ENCODE measurements at regions of chr9 and their contacts with region 1.

Region 1: DNA sequence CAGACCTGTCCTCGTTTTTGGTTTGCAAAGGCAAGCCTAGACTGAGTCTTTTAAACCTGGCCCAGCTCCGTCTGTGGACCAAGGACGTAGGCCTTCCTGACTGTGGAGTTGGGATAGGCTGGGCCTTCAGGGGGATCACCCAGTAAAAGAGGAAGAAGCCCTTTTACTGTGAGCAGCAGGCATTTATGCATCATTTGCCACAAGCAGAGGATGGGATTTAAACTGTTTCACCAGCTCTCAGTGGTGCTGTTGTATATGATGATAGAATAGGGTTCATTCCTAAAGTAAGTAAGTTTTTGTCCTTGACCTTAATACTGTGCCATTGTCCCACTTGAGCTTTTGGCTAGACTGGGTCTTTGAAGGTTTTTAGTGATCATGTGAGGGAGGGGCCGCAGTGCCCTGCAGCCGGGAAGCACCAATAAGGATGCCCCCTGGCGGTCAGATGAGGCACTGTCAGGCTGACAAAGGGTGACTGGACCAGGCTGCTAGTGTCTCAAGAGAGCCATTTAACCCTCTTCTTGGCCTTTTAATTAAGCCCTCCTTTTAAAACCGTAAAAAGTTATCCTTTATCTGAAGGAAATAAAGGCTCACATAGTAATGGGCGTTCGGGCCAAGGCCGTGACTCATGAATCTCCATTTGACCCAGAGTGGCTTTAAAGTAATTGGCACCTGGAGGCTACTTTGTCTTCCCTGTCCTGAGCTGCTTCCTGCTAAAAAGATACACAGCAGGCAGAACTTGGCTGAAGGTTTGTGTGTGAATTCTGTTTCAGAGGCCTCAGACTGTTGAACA is 74.0 kb downstream of the UBAP1 start:
- DNase-seq: peak; percentile 82
- H3K4me3 ChIP-seq: no peak overlapping the region
- H3K27ac ChIP-seq: peak overlapping the region; percentile 73 to 95
- H3K4me1 ChIP-seq: peaks cover 71% of the 10 kb centered on the region
- H3K27me3 ChIP-seq: no peaks in the 10 kb centered on the region
- CTCF ChIP-seq: peak; percentile 90 to 96 (median 92)
- POLR2A ChIP-seq: no peak

Region 2: DNA sequence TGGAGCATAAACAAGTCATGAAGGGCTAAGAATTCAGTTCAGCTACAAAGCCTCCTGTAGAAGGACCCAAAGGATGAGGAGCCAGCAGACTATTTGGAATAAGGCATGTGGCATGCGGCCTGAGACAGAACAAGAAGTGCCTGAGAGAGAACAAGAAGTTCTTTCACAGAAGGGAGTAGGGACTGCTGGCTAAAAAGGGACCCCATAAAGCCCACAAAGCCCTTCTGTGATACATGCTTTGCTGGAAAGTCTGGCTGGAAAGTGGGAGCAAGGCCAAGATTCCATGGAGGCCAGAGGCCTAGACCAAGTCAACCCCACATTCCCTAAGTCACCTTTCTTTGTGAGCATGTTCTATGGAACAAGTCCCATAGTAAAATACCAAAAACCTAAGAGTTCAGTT is 168.3 kb before region 1 on chr9:
- intact Hi-C with region 1: loop called (anchors 10 kb)
- DNase-seq: peak; percentile 82
- H3K4me3 ChIP-seq: no peak overlapping the region
- H3K27ac ChIP-seq: peak overlapping the region; percentile 63 to 92
- H3K4me1 ChIP-seq: peaks cover 37% of the 10 kb centered on the region
- H3K27me3 ChIP-seq: no peaks in the 10 kb centered on the region
- CTCF ChIP-seq: no peak
- POLR2A ChIP-seq: no peak

Region 3: DNA sequence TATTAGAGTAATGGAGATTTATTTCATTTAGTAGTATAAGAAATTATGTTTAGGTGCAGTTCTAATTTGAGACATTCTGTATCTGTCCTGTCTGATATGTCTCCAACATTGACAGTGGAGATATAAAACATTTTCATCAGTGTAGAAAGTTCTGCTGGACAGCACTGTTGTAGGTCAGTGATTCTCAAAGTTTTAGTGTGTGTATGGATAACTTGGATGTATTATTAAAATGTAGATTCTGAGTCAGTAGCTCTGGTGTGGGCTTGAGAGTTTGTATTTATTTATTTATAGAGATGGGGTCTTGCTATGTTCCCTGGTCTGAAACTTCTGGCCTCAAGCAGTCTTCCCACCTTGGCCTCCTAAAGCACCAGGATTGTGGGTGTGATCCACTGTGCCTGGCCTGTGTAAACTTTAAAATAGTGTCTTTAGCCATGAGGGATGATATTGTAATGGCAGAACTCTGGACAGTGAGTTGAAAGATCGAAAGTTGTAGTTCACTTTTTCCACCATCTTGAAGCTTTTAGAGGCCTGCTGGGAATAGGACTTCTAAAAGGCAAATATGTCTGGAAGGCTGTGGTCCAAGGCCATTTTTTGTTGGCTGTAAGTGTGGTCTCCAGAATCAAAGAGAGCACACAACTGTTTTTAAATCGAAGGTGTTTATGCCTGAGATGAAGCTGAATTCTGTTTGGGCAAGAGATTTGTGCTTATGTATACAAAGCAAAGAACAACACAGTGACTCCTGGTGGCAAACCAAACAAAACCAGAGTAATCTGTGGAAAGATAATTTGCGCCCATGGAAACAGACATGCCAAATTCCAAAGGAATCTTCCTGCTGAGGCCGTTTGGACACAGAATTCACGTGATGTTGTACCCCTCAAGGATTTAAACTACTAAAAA is 61.6 kb before region 1 on chr9:
- intact Hi-C with region 1: loop called (anchors 10 kb)
- DNase-seq: no peak
- H3K4me3 ChIP-seq: no peak overlapping the region
- H3K27ac ChIP-seq: peak overlapping the region; percentile 69 to 71
- H3K4me1 ChIP-seq: peaks cover 39% of the 10 kb centered on the region
- H3K27me3 ChIP-seq: no peaks in the 10 kb centered on the region
- CTCF ChIP-seq: peak in 2 of 3 experiments; percentile 28 to 47
- POLR2A ChIP-seq: no peak